ENCODE measurements at regions of chr17 and their contacts with region 1.

Region 1: GRCh38 chr17:10135539-10136257 is 62.7 kb downstream of the GAS7 start:
- DNase-seq: peak in 1 of 2 donors; percentile 46
- ATAC-seq: no peak
- H3K4me3 ChIP-seq: no peak overlapping the region
- H3K27ac ChIP-seq: peak overlapping the region; percentile 3 to 55 (median 20)
- H3K4me1 ChIP-seq: no peaks in the 10 kb centered on the region
- H3K27me3 ChIP-seq: no peaks in the 10 kb centered on the region
- CTCF ChIP-seq: no peak
- POLR2A ChIP-seq: no peak

Region 2: GRCh38 chr17:10198509-10199253 is 63.0 kb after region 1 on chr17 and contains the start of gene GAS7:
- in situ Hi-C with region 1: loop called in 1 of 4 experiments (anchors 10 kb)
- intact Hi-C with region 1: no loop called
- DNase-seq: peak in 1 of 2 donors; percentile 29
- ATAC-seq: peak in 1 of 2 donors; percentile 43
- H3K4me3 ChIP-seq: peak within 1 kb of the TSS; percentile 34 to 50 (median 46)
- H3K27ac ChIP-seq: peak within 1 kb of the TSS in 3 of 4 donors; percentile 1 to 41 (median 30)
- H3K4me1 ChIP-seq: no peaks in the 10 kb centered on the region
- H3K27me3 ChIP-seq: peaks cover 16 to 19% (median 19%) of the 10 kb centered on the region in 3 donors
- CTCF ChIP-seq: no peak
- POLR2A ChIP-seq: peak; percentile 14 to 24
- total RNA-seq, gene GAS7: 5.8 to 7.1 (median 6.1) TPM

Measured in gastrocnemius medialis (tissue), 4 donors.